Left cardiac atrium (tissue), 4 donors: ENCODE measurements at regions of chr15 and their contacts with region 1.

Region 1: GRCh38 chr15:80776420-80777045 is 2.6 kb upstream of the CEMIP start:
- DNase-seq: peak; percentile 72
- ATAC-seq: peak; percentile 32 to 41

Region 2: GRCh38 chr15:80455668-80456442 is 320.7 kb before region 1 on chr15:
- intact Hi-C with region 1: loop called in 1 of 2 experiments (anchors 2 kb)
- DNase-seq: peak; percentile 42
- ATAC-seq: peak; percentile 79 to 81

Region 3: GRCh38 chr15:80567721-80568157 is 208.8 kb before region 1 on chr15:
- intact Hi-C with region 1: loop called (anchors 5 kb)
- DNase-seq: peak; percentile 45
- ATAC-seq: peak; percentile 84 to 89

Region 4: GRCh38 chr15:80615761-80616391 is 160.7 kb before region 1 on chr15:
- intact Hi-C with region 1: loop called in 1 of 2 experiments (anchors 5 kb)
- DNase-seq: peak; percentile 76
- ATAC-seq: peak; percentile 76 to 82

Region 5: DNA sequence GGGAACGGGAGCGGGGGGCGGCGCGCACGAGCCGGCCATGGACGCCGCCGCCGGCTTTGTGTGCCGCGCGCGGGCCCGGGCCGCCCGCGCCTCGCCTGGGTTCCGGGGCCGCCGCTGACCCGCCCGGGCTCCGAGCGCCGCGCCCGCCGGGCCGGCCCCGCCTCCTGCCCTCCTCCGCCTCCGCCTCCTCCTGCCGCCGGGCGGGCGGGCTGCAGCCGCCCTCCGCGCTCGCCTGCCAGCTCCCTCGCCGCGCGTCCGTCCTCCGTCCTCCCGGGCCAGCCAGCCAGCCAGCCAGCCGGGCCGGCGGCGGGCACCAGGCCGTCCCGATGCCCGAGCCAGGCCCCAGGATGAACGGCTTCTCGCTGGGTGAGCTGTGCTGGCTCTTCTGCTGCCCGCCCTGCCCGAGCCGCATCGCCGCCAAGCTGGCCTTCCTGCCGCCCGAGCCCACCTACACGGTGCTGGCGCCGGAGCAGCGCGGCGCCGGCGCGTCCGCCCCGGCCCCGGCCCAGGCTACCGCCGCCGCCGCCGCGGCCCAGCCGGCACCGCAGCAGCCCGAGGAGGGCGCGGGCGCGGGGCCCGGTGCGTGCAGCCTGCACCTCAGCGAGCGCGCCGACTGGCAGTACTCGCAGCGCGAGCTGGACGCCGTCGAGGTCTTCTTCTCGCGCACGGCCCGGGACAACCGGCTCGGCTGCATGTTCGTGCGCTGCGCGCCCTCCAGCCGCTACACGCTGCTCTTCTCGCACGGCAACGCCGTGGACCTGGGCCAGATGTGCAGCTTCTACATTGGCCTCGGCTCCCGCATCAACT is 81.2 kb before region 1 on chr15 and contains the start of gene ABHD17C:
- intact Hi-C with region 1: loop called in 1 of 2 experiments (anchors 10 kb)
- DNase-seq: peak; percentile 71
- ATAC-seq: peak; percentile 88 to 92
- total RNA-seq, gene ABHD17C: 3.3 to 5.3 TPM

Region 6: DNA sequence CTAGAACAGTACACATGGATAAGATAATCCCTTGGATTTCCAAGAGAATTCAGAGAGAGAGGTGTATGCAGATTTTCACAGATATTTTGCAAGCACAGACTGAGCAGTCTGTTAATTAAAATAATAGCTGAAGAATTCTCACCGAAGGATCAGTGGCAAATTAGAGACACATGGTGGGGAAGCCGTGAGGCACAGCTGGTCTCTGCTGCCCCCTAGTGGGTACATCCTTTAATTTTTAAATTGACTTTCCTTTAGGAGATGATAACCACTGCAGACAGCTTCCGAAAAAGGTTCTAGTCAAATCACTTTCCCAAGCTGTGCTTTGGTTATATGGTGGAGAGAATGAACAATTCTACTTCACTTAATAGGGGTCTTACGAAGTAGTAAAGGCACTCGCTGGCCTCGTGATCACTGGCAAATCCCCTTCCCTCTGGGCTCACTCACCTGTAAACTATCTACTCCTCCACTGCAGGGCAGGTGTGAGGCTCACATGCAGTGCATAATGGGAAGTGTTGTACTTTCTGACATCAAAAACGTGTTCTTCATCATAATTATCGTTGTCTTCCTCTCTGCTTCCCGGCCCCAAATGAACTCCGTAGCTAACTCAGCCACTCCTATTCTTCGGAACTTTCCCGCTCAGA is 193.6 kb after region 1 on chr15:
- intact Hi-C with region 1: loop called (anchors 2 to 5 kb)
- DNase-seq: peak; percentile 55
- ATAC-seq: peak; percentile 59 to 72